A549 (cell line): ENCODE measurements at regions of chr20 and their contacts with region 1.

Region 1: GRCh38 chr20:48657475-48658470 is 170.0 kb downstream of the PREX1 start:
- DNase-seq: peak; percentile 78 to 92
- ATAC-seq: peak; percentile 83 to 91
- H3K4me3 ChIP-seq: no peak overlapping the region
- H3K27ac ChIP-seq: no peak overlapping the region
- H3K4me1 ChIP-seq: no peaks in the 10 kb centered on the region
- CTCF ChIP-seq: peak; percentile 94
- EP300 ChIP-seq: no peak
- POLR2A ChIP-seq: no peak
- RAD21 ChIP-seq: peak; percentile 96 to 99

Region 2: DNA sequence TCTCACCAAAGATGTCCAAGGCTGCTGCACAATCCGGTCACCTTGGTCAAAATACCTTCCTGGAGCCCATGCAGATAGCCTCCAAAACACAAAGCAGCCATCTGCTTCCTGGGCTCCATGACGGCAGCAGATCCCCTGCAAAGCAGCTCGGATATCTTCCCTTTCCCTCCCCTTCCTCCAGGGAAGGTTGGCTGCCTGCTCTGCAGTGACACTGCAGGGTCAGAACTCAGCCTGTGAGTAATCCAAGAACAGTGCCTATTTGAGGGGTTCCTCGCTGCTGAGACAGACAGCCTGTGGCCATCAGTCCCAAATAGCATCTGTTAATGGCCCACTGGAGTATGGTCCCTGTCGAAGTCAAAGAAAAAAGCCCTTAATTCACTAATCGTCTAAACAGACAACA is 100.8 kb before region 1 on chr20:
- CTCF ChIA-PET with region 1: no interaction called
- POLR2A ChIA-PET with region 1: no interaction called
- DNase-seq: no peak
- ATAC-seq: no peak
- H3K4me3 ChIP-seq: no peak overlapping the region
- H3K27ac ChIP-seq: no peak overlapping the region
- H3K4me1 ChIP-seq: no peaks in the 10 kb centered on the region
- CTCF ChIP-seq: no peak
- EP300 ChIP-seq: no peak
- POLR2A ChIP-seq: no peak
- RAD21 ChIP-seq: no peak

Region 3: GRCh38 chr20:48673556-48673955 is 15.8 kb after region 1 on chr20:
- CTCF ChIA-PET with region 1: interaction called, 62 read pairs
- POLR2A ChIA-PET with region 1: no interaction called
- DNase-seq: no peak
- ATAC-seq: no peak
- H3K4me3 ChIP-seq: no peak overlapping the region
- H3K27ac ChIP-seq: no peak overlapping the region
- H3K4me1 ChIP-seq: no peaks in the 10 kb centered on the region
- CTCF ChIP-seq: no peak
- EP300 ChIP-seq: no peak
- POLR2A ChIP-seq: no peak
- RAD21 ChIP-seq: no peak

Region 4: DNA sequence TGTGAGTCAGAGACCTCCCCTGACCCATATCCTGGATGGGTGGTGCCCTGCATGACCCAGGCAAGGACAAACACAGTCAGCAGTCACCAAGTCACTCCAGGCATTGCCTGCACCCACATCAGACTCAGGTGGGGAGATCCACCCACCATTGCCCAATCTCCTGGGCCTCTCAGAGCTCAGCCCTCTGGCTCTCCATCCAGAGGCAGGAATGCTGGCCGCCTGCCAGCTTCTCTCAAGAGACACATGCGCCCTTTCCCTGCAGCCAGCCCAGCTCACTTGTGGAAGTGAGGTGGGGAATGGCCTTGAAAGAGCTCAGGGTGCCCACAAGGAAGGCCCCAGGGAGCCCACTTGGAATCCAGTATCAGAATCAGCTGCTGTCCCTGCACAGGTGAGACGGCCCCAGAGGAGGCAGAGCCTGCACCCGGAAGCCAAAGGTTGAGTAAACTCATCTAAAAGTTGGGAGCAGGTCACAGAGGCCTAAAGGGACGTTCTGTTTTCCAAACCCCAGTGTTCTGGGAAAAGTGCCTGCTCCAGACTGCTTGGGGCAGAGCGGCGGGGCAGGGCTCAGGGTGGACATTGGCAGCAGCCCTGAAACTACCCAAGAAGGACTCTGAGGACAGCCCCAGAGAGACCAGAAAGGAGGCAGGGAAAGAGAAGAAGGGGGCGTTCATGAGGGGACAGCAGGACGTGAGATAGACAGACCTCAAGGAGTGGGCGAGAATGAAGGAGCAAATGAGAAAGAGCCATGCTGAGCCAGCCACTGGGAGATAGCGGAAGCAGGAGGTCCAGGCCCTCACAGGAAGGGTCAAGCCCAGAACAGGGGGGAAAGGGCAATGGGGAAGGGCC is 40.3 kb after region 1 on chr20:
- CTCF ChIA-PET with region 1: interaction called, 13 read pairs
- POLR2A ChIA-PET with region 1: no interaction called
- DNase-seq: peak; percentile 56 to 61
- ATAC-seq: peak; percentile 47 to 80; a peak in 5 of 6 replicates
- H3K4me3 ChIP-seq: no peak overlapping the region
- H3K27ac ChIP-seq: peak overlapping the region; percentile 57 to 70; a peak in 5 of 6 replicates
- H3K4me1 ChIP-seq: peaks cover 16% of the 10 kb centered on the region
- CTCF ChIP-seq: no peak
- EP300 ChIP-seq: no peak
- POLR2A ChIP-seq: no peak
- RAD21 ChIP-seq: no peak

Region 5: GRCh38 chr20:48787861-48788375 is 130.1 kb after region 1 on chr20:
- CTCF ChIA-PET with region 1: interaction called, 12 read pairs
- POLR2A ChIA-PET with region 1: no interaction called
- DNase-seq: peak; percentile 28 to 29
- ATAC-seq: peak in 1 of 2 experiments; percentile 62; a peak in 3 of 6 replicates
- H3K4me3 ChIP-seq: no peak overlapping the region
- H3K27ac ChIP-seq: peak overlapping the region; percentile 11 to 66; a peak in 3 of 6 replicates
- H3K4me1 ChIP-seq: peaks cover 27% of the 10 kb centered on the region
- CTCF ChIP-seq: no peak
- EP300 ChIP-seq: no peak
- POLR2A ChIP-seq: no peak
- RAD21 ChIP-seq: no peak

Region 6: DNA sequence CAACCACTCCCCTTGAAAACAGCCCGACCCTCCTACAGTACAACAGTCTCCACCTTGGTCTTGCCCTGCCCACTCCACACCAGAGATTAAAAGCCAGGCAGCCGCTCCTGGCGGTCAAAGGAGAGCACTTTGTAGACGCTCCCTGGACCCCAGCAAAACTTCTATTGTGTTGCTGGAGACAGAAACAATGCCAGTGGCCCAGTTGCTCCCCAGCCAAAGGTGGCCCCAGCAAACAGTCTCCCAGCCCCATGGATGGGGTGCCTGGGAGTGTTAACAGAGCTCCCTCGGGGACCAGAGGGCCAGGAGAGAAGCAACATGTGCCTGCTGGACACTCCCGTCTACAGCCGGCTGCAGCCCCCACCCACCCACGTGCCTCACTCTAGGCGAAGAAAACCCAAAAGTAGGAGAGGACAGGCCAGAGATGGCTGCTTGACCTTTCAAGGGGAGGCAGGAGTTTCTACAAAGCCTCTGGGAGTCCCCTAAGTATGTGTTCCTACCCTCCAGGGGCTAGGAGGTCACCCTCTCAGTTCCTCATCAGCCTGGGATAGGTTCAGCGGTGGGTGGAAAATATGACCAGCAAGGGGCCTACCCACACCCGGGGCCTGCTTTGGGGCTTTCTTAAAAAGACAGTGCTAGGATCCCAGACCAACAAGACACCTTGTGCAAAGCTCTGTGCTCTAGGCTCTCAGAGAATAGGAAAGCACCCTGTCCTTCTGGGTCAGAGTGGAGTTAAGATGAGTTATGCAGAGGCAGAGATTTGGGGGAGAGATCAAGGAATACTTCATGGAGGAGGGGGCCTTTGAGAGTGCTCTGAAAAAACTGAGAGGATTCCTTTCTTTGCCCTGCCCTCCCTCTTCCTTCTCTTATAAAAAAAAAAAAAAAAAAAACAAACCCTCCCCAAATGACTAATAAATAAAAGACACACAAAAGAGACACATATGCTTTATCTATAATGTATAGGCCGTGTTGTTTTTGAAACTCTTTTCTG is 189.0 kb after region 1 on chr20:
- CTCF ChIA-PET with region 1: interaction called, 13 read pairs
- POLR2A ChIA-PET with region 1: no interaction called
- DNase-seq: peak in 1 of 2 experiments; percentile 54
- ATAC-seq: peak; percentile 54 to 76; a peak in 5 of 6 replicates
- H3K4me3 ChIP-seq: no peak overlapping the region
- H3K27ac ChIP-seq: peak overlapping the region; percentile 63 to 82
- H3K4me1 ChIP-seq: peaks cover 49% of the 10 kb centered on the region
- CTCF ChIP-seq: no peak
- EP300 ChIP-seq: no peak
- POLR2A ChIP-seq: no peak
- RAD21 ChIP-seq: 0 out of 5 replicates have a peak, but pooled peaks of 1 of the 2 experiments have one; percentile 8

Region 7: GRCh38 chr20:48897246-48897994 is 239.6 kb after region 1 on chr20:
- CTCF ChIA-PET with region 1: interaction called, 85 read pairs
- POLR2A ChIA-PET with region 1: interaction called, 4 read pairs
- DNase-seq: peak; percentile 70 to 80
- ATAC-seq: peak; percentile 94 to 97
- H3K4me3 ChIP-seq: no peak overlapping the region
- H3K27ac ChIP-seq: peak overlapping the region; percentile 51 to 79
- H3K4me1 ChIP-seq: peaks cover 19% of the 10 kb centered on the region
- CTCF ChIP-seq: no peak
- EP300 ChIP-seq: no peak; a peak in 1 of 5 replicates
- POLR2A ChIP-seq: no peak
- RAD21 ChIP-seq: no peak